Naive thymus-derived CD4-positive, alpha-beta T cell (primary cell): ENCODE measurements at regions of chr6 and their contacts with region 1.

Region 1: DNA sequence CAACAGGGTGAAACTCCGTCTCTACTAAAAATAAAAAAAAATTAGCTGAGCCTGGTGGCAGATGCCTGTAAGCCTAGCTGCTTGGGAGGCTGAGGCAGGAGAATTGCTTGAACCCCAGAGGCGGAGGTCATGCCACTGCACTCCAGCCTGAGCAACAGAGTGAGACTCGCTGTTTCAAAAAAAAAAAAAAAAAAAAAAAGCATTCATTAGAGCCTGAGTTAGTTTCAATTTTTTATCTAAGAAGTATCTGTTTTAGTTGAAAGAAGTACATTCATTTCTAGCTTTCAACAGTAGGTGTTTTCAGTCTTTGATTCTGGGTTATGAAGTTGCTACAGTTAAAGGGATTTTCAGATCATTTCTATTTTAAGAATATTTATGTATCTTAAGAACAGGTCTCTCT is 42.2 kb downstream of the ZNF292 start:
- DNase-seq: no peak
- ATAC-seq: no peak
- H3K4me3 ChIP-seq: no peak overlapping the region
- H3K4me3 Mint-ChIP-seq: no peak overlapping the region
- H3K27ac ChIP-seq: no peak overlapping the region
- H3K27ac Mint-ChIP-seq: no peak overlapping the region
- H3K4me1 ChIP-seq: peaks cover 4 to 11% of the 10 kb centered on the region in 2 donors
- H3K4me1 Mint-ChIP-seq: peaks cover 37 to 90% (median 76%) of the 10 kb centered on the region in 7 donors
- H3K27me3 ChIP-seq: no peaks in the 10 kb centered on the region
- H3K27me3 Mint-ChIP-seq: no peaks in the 10 kb centered on the region

Region 2: DNA sequence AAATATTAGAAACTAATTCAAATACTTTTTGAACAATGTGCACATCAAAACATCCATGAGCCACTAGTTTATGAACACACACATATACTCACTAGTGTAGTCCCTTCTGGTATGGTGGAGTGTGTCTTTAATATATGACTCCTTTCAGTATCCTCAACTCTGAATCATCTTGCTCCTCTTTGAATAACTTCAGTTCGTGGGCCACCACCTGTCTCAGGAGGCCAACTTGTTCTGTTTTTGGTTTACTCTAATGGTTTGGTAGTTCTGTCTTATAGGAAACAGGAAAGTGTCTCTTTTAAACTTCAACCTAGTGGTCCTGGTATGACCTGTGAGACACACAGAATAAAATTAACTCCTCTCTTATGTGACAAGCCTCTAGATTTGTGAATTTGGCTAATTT is 13.4 kb after region 1 on chr6:
- CTCF ChIA-PET with region 1: no interaction called
- POLR2A ChIA-PET with region 1: no interaction called
- intact Hi-C with region 1: loop called (anchors 2 kb)
- DNase-seq: no peak
- ATAC-seq: no peak
- H3K4me3 ChIP-seq: no peak overlapping the region
- H3K4me3 Mint-ChIP-seq: peak overlapping the region in 1 of 10 donors; percentile 9
- H3K27ac ChIP-seq: no peak overlapping the region
- H3K27ac Mint-ChIP-seq: peak overlapping the region in 1 of 9 donors; percentile 22
- H3K4me1 ChIP-seq: peaks cover 0 to 10% of the 10 kb centered on the region in 2 donors
- H3K4me1 Mint-ChIP-seq: peaks cover 44 to 86% (median 80%) of the 10 kb centered on the region in 7 donors
- H3K27me3 ChIP-seq: no peaks in the 10 kb centered on the region
- H3K27me3 Mint-ChIP-seq: no peaks in the 10 kb centered on the region

Region 3: DNA sequence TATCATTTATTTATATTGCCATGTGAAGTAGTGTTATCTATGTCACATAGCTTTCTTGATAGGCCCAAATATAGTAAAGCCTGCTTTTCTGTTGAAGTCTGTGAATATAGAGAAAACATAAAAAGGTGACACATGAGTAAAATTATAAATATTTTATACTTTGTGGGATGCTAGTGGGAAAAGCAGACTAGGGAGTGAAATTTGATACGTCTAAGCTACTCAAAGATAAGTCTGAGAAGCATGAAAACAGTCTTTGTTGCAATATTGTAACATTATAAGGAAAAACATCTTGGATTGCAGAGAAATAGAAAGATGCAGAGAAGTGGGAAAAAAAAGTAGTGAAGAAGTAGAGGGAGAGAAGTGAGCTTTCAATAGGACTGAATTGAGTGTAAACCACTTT is 33.3 kb after region 1 on chr6:
- CTCF ChIA-PET with region 1: no interaction called
- POLR2A ChIA-PET with region 1: no interaction called
- intact Hi-C with region 1: no loop called
- DNase-seq: no peak
- ATAC-seq: no peak
- H3K4me3 ChIP-seq: no peak overlapping the region
- H3K4me3 Mint-ChIP-seq: no peak overlapping the region
- H3K27ac ChIP-seq: no peak overlapping the region
- H3K27ac Mint-ChIP-seq: peak overlapping the region in 2 of 9 donors; percentile 34 to 64
- H3K4me1 ChIP-seq: no peaks in the 10 kb centered on the region
- H3K4me1 Mint-ChIP-seq: peaks cover 0 to 19% (median 7%) of the 10 kb centered on the region in 7 donors
- H3K27me3 ChIP-seq: no peaks in the 10 kb centered on the region
- H3K27me3 Mint-ChIP-seq: no peaks in the 10 kb centered on the region